CD8-positive, alpha-beta memory T cell (primary cell): ENCODE measurements at regions of chr6 and their contacts with region 1.

Region 1: DNA sequence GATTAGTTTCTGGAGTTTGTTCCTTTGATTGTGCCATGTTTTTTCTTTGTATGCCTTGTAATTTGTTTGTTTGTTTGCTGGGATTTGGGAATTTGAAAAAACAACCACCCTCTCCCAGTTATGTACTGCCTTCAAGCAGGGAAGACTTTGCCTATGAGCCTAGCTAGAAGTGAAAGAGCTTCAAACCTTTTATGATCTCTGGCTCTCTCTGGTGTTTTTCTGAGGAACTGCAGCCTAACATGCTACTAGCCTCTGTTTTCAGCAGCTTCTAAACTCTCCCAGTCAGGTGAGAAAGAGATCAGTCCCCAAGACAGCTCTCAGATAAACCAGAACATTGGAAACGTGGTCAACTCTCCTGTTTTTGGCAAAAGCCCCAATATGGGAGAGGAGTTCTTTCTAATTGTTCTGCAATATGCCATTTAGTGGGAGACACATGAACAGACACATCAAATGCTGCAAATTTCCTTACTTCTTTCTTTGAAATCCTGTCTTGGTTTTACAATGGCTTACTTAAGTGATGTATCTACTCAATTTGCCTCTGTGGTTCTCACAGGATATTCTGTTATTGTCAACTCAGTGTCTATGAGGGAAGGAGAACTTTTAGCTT is 58.9 kb upstream of the SERINC1 start:
- DNase-seq: peak; percentile 15 to 59 (median 52)
- H3K4me3 ChIP-seq: no peak overlapping the region
- H3K4me3 Mint-ChIP-seq: no peak overlapping the region
- H3K27ac ChIP-seq: no peak overlapping the region
- H3K27ac Mint-ChIP-seq: no peak overlapping the region
- H3K4me1 ChIP-seq: no peaks in the 10 kb centered on the region
- H3K4me1 Mint-ChIP-seq: no peaks in the 10 kb centered on the region
- H3K27me3 ChIP-seq: no peaks in the 10 kb centered on the region
- H3K27me3 Mint-ChIP-seq: peaks cover 9 to 43% of the 10 kb centered on the region in 2 donors

Region 2: DNA sequence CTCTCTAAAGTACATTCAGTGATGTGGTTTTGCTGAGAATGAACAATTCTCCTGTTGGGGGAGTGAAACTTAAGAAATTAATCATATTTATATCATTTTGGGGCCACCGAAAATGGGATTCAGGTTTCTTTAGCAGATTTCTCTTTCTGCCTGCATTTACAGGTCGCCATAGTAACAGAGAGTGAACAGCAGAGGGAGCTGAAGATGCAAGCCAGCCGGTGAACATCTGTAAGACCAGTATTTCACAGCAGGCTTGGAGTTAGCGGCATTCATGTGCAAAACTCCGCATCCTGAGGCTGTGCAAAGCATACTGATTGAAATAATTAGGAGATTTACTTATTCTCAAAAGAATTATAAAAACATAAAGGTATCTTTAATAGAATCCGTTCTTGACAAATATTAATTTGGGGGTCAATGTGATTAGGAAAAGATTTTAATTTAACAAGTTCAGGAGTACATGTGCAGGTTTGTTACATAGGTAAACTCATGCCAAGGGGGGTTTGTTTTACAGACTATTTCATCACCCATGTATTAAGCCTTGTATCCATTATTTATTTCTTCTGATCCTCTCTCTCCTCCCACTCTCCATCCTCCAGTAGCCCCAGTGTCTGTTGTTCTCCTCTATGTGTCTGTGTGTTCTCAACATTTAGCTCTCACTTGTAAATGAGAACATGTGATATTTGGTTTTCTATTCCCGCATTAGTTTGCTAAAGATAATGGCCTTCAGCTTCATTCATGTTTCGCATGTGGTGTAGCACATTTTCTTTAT is 148.9 kb before region 1 on chr6:
- CTCF ChIA-PET with region 1: interaction called, 31 read pairs
- POLR2A ChIA-PET with region 1: no interaction called
- DNase-seq: peak; percentile 17 to 71 (median 57)
- H3K4me3 ChIP-seq: no peak overlapping the region
- H3K4me3 Mint-ChIP-seq: no peak overlapping the region
- H3K27ac ChIP-seq: no peak overlapping the region
- H3K27ac Mint-ChIP-seq: no peak overlapping the region
- H3K4me1 ChIP-seq: no peaks in the 10 kb centered on the region
- H3K4me1 Mint-ChIP-seq: peaks cover 6 to 8% (median 7%) of the 10 kb centered on the region in 3 donors
- H3K27me3 ChIP-seq: no peaks in the 10 kb centered on the region
- H3K27me3 Mint-ChIP-seq: peaks cover 4 to 16% of the 10 kb centered on the region in 2 donors

Region 3: GRCh38 chr6:122491919-122492555 is 38.5 kb before region 1 on chr6:
- CTCF ChIA-PET with region 1: interaction called, 70 read pairs
- POLR2A ChIA-PET with region 1: no interaction called
- DNase-seq: peak; percentile 46 to 73 (median 54)
- H3K4me3 ChIP-seq: no peak overlapping the region
- H3K4me3 Mint-ChIP-seq: peak overlapping the region in 1 of 7 donors; percentile 3
- H3K27ac ChIP-seq: no peak overlapping the region
- H3K27ac Mint-ChIP-seq: no peak overlapping the region
- H3K4me1 ChIP-seq: no peaks in the 10 kb centered on the region
- H3K4me1 Mint-ChIP-seq: peaks cover 4 to 6% (median 4%) of the 10 kb centered on the region in 3 donors
- H3K27me3 ChIP-seq: no peaks in the 10 kb centered on the region
- H3K27me3 Mint-ChIP-seq: peaks cover 4 to 14% of the 10 kb centered on the region in 2 donors

Region 4: GRCh38 chr6:122520179-122520578 is 10.4 kb before region 1 on chr6:
- CTCF ChIA-PET with region 1: interaction called, 10 read pairs
- POLR2A ChIA-PET with region 1: no interaction called
- DNase-seq: no peak
- H3K4me3 ChIP-seq: no peak overlapping the region
- H3K4me3 Mint-ChIP-seq: no peak overlapping the region
- H3K27ac ChIP-seq: no peak overlapping the region
- H3K27ac Mint-ChIP-seq: no peak overlapping the region
- H3K4me1 ChIP-seq: no peaks in the 10 kb centered on the region
- H3K4me1 Mint-ChIP-seq: no peaks in the 10 kb centered on the region
- H3K27me3 ChIP-seq: no peaks in the 10 kb centered on the region
- H3K27me3 Mint-ChIP-seq: peaks cover 3 to 30% of the 10 kb centered on the region in 2 donors

Region 5: DNA sequence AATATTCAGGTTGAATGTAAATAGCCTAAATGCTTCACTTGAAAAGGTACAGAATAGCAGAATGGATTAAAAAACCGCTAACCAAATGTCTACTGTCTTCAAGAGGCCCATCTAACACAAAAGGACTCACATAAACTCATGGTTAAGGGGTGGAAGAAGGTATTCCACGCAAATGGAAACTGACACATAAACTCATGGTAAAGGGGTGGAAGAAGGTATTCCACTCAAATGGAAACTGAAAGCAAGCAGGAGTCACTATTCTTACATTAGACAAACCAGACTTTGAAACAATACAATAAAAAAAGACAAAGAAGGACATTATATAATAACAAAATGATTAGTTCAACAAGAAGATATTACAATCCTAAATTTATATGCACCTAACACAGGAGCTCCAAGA is 41.3 kb after region 1 on chr6:
- CTCF ChIA-PET with region 1: no interaction called
- POLR2A ChIA-PET with region 1: no interaction called
- DNase-seq: no peak
- H3K4me3 ChIP-seq: no peak overlapping the region
- H3K4me3 Mint-ChIP-seq: no peak overlapping the region
- H3K27ac ChIP-seq: no peak overlapping the region
- H3K27ac Mint-ChIP-seq: no peak overlapping the region
- H3K4me1 ChIP-seq: no peaks in the 10 kb centered on the region
- H3K4me1 Mint-ChIP-seq: no peaks in the 10 kb centered on the region
- H3K27me3 ChIP-seq: no peaks in the 10 kb centered on the region
- H3K27me3 Mint-ChIP-seq: peaks cover 4 to 17% of the 10 kb centered on the region in 2 donors

Region 6: GRCh38 chr6:122589115-122589514 is 58.6 kb after region 1 on chr6:
- CTCF ChIA-PET with region 1: no interaction called
- POLR2A ChIA-PET with region 1: no interaction called
- DNase-seq: no peak
- H3K4me3 ChIP-seq: no peak overlapping the region
- H3K4me3 Mint-ChIP-seq: no peak overlapping the region
- H3K27ac ChIP-seq: no peak overlapping the region
- H3K27ac Mint-ChIP-seq: no peak overlapping the region
- H3K4me1 ChIP-seq: no peaks in the 10 kb centered on the region
- H3K4me1 Mint-ChIP-seq: no peaks in the 10 kb centered on the region
- H3K27me3 ChIP-seq: no peaks in the 10 kb centered on the region
- H3K27me3 Mint-ChIP-seq: peaks cover 0 to 4% of the 10 kb centered on the region in 2 donors

Region 7: DNA sequence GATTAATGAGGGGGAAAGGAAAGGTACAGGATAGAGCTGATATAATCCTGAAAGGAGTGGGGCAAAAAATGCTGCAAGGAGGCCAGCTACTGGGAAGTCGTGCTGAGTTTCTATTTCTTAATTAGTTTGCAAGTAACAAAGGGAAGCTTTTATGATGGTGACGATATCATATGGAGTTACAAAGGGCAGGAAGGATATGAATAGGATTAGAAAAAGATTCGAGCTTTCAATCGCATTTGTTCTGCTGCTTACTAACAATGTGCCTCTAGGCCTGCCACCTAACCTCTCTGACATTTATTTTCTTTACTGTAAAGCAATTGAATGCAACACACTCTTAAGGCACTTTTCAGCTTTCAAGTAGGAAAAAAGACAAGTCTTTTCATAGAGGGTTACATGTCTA is 684.7 kb after region 1 on chr6:
- CTCF ChIA-PET with region 1: no interaction called
- POLR2A ChIA-PET with region 1: no interaction called
- DNase-seq: no peak
- H3K4me3 ChIP-seq: no peak overlapping the region
- H3K4me3 Mint-ChIP-seq: no peak overlapping the region
- H3K27ac ChIP-seq: no peak overlapping the region
- H3K27ac Mint-ChIP-seq: no peak overlapping the region
- H3K4me1 ChIP-seq: no peaks in the 10 kb centered on the region
- H3K4me1 Mint-ChIP-seq: no peaks in the 10 kb centered on the region
- H3K27me3 ChIP-seq: no peaks in the 10 kb centered on the region
- H3K27me3 Mint-ChIP-seq: no peaks in the 10 kb centered on the region